ENCODE measurements at regions of chr3 and their contacts with region 1.

Region 1: GRCh38 chr3:169619793-169620192 is 43.7 kb downstream of the MECOM start:
- DNase-seq: peak; percentile 73
- H3K4me3 ChIP-seq: no peak overlapping the region
- H3K27ac ChIP-seq: peak overlapping the region; percentile 9
- H3K4me1 ChIP-seq: peaks cover 12% of the 10 kb centered on the region
- H3K27me3 ChIP-seq: no peaks in the 10 kb centered on the region
- CTCF ChIP-seq: peak in 1 of 2 donors; percentile 15
- POLR2A ChIP-seq: no peak

Region 2: GRCh38 chr3:169629895-169630294 is 10.1 kb after region 1 on chr3:
- CTCF ChIA-PET with region 1: interaction called, 10 read pairs
- POLR2A ChIA-PET with region 1: no interaction called
- dilution Hi-C with region 1: no loop called
- intact Hi-C with region 1: no loop called
- DNase-seq: no peak
- H3K4me3 ChIP-seq: no peak overlapping the region
- H3K27ac ChIP-seq: no peak overlapping the region
- H3K4me1 ChIP-seq: peaks cover 3% of the 10 kb centered on the region
- H3K27me3 ChIP-seq: no peaks in the 10 kb centered on the region
- CTCF ChIP-seq: no peak
- POLR2A ChIP-seq: no peak

Region 3: DNA sequence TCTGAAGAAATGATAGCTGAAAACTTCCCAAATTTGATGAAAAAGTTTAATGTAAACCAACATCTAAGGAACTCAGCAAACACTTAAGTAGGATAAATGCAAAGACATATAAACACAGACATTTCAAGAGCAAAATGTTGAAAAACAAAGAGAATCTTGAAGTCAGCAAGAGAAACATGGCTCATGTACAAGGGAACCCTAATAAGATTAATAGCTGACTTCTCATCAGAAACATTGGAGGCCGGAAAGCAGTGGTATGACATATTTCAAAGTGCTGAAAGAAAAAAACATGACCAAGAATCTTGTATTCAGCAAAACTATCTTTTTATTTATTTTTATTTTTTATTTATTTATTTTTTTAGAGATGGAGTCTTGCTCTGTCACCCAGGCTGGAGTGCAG is 591.9 kb after region 1 on chr3:
- CTCF ChIA-PET with region 1: no interaction called
- POLR2A ChIA-PET with region 1: no interaction called
- dilution Hi-C with region 1: no loop called
- intact Hi-C with region 1: no loop called
- DNase-seq: no peak
- H3K4me3 ChIP-seq: no peak overlapping the region
- H3K27ac ChIP-seq: no peak overlapping the region
- H3K4me1 ChIP-seq: no peaks in the 10 kb centered on the region
- H3K27me3 ChIP-seq: no peaks in the 10 kb centered on the region
- CTCF ChIP-seq: no peak
- POLR2A ChIP-seq: no peak